ENCODE measurements at regions of chr10 and their contacts with region 1.

Region 1: GRCh38 chr10:77926566-77927401 is at the start of gene DLG5:
- DNase-seq: peak in 1 of 2 experiments; percentile 67
- H3K4me3 ChIP-seq: peak within 1 kb of the TSS; percentile 80
- H3K27ac ChIP-seq: no peak within 1 kb of the TSS
- H3K4me1 ChIP-seq: peaks cover 31% of the 10 kb centered on the region
- H3K27me3 ChIP-seq: no peaks in the 10 kb centered on the region
- CTCF ChIP-seq: no peak
- total RNA-seq, gene DLG5: 75.5 and 81.7 TPM in 2 replicates

Region 2: GRCh38 chr10:77889277-77889903 is 37.4 kb before region 1 on chr10:
- CTCF ChIA-PET with region 1: no interaction called
- POLR2A ChIA-PET with region 1: interaction called, 3 read pairs
- intact Hi-C with region 1: loop called (anchors 2 kb)
- DNase-seq: peak; percentile 93 to 97
- H3K4me3 ChIP-seq: no peak overlapping the region
- H3K27ac ChIP-seq: peak overlapping the region; percentile 73
- H3K4me1 ChIP-seq: peaks cover 34% of the 10 kb centered on the region
- H3K27me3 ChIP-seq: no peaks in the 10 kb centered on the region
- CTCF ChIP-seq: no peak

Region 3: GRCh38 chr10:77898647-77899477 is 27.9 kb before region 1 on chr10:
- CTCF ChIA-PET with region 1: no interaction called
- POLR2A ChIA-PET with region 1: interaction called, 4 read pairs
- intact Hi-C with region 1: loop called (anchors 2 kb)
- DNase-seq: peak; percentile 86 to 90
- H3K4me3 ChIP-seq: no peak overlapping the region
- H3K27ac ChIP-seq: no peak overlapping the region; the same call in 1 of the 2 replicates
- H3K4me1 ChIP-seq: peaks cover 25% of the 10 kb centered on the region
- H3K27me3 ChIP-seq: no peaks in the 10 kb centered on the region
- CTCF ChIP-seq: no peak

Region 4: GRCh38 chr10:77907900-77908717 is 18.7 kb before region 1 on chr10:
- CTCF ChIA-PET with region 1: no interaction called
- POLR2A ChIA-PET with region 1: interaction called, 8 read pairs
- intact Hi-C with region 1: loop called (anchors 1 kb)
- DNase-seq: no peak
- H3K4me3 ChIP-seq: no peak overlapping the region
- H3K27ac ChIP-seq: no peak overlapping the region
- H3K4me1 ChIP-seq: peaks cover 27% of the 10 kb centered on the region
- H3K27me3 ChIP-seq: no peaks in the 10 kb centered on the region
- CTCF ChIP-seq: peak; percentile 47

Region 5: DNA sequence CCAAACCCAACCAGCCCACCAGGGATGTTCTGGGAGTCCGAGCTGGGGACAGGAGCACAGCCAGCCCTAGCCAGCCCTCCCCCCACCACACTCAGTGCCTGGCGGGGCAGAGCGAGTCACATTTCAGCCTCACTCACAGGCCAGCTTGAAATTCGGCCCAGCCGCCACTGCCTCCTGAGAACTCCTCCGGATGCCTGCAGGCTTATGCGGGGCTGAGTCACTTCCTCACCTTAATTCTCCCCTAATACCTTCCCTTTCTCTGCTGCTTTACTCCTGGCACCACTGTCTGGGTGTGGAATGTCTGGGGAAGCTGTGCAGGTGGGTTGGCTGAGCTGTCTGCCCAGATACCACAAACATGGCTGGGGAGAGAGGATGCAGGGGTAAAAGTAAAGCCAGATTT is 22.4 kb after region 1 on chr10:
- CTCF ChIA-PET with region 1: no interaction called
- POLR2A ChIA-PET with region 1: no interaction called
- intact Hi-C with region 1: loop called (anchors 1 kb)
- DNase-seq: peak; percentile 94 to 98
- H3K4me3 ChIP-seq: peak overlapping the region; percentile 7; the same call in 1 of the 2 replicates
- H3K27ac ChIP-seq: peak overlapping the region; percentile 85
- H3K4me1 ChIP-seq: peaks cover 47% of the 10 kb centered on the region
- H3K27me3 ChIP-seq: no peaks in the 10 kb centered on the region
- CTCF ChIP-seq: no peak

Region 6: DNA sequence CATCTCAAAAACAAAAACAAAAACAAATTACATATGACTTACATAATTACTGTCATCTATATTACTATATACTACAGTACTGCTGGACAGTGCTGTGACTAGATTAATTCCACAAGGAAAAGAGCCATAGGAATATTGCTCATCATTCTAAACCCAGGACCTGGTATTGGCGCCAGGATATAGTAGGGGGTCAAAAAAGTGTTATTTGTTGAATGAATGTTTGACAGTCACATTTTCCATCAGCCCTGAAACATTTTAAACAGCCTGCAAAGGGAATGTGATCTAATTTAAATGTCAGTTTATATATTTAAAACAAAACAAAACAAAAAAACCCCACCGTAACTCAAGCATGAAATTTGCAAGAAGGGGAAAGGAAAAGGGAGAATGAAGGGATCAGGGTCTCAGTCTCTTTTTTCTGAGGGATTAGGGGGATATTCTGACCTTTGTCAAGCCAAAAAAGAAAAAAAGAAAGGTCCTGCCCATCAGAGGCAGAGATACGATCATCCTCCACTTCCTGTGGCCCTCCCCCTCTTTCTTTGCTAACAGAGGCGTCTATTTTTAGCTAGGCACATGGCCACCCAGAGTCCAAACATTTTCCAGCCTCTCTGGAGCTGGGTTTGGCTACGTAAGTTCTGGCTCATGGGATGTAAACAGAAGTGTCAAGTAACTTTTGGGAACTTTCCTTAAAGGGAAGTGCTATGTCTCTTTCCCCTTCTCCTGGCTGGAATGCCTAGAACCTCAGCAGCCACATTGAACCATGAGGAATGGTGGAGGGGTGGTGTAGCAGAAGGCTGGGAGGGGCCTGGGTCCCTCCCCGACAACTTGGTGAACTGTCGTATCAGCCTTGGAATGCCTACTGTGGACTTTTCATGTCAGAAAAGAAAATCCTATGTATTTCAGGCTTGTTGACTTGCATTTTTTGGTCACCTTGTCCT is 44.4 kb after region 1 on chr10:
- CTCF ChIA-PET with region 1: no interaction called
- POLR2A ChIA-PET with region 1: no interaction called
- intact Hi-C with region 1: loop called (anchors 5 kb)
- DNase-seq: peak in 1 of 2 experiments; percentile 38
- H3K4me3 ChIP-seq: no peak overlapping the region
- H3K27ac ChIP-seq: no peak overlapping the region
- H3K4me1 ChIP-seq: peaks cover 5% of the 10 kb centered on the region; the same call in 1 of the 2 replicates
- H3K27me3 ChIP-seq: no peaks in the 10 kb centered on the region
- CTCF ChIP-seq: no peak

Region 7: GRCh38 chr10:78029269-78030226 is 102.8 kb after region 1 on chr10 and contains the start of gene POLR3A:
- CTCF ChIA-PET with region 1: interaction called, 12 read pairs
- POLR2A ChIA-PET with region 1: no interaction called
- intact Hi-C with region 1: no loop called
- DNase-seq: peak; percentile 93 to 96
- H3K4me3 ChIP-seq: peak within 1 kb of the TSS; percentile 74
- H3K27ac ChIP-seq: peak within 1 kb of the TSS; percentile 28
- H3K4me1 ChIP-seq: peaks cover 38% of the 10 kb centered on the region
- H3K27me3 ChIP-seq: no peaks in the 10 kb centered on the region
- CTCF ChIP-seq: peak; percentile 87
- total RNA-seq, gene POLR3A: 13.1 and 14.9 TPM in 2 replicates